Mammary epithelial cell (primary cell): ENCODE measurements at regions of chr17 and their contacts with region 1.

Region 1: GRCh38 chr17:61002316-61002736 is 324.7 kb downstream of the BCAS3 start:
- DNase-seq: peak; percentile 12
- H3K4me3 ChIP-seq: no peak overlapping the region
- H3K27ac ChIP-seq: no peak overlapping the region
- H3K4me1 ChIP-seq: no peaks in the 10 kb centered on the region
- H3K27me3 ChIP-seq: no peaks in the 10 kb centered on the region
- CTCF ChIP-seq: peak; percentile 32 to 52

Region 2: DNA sequence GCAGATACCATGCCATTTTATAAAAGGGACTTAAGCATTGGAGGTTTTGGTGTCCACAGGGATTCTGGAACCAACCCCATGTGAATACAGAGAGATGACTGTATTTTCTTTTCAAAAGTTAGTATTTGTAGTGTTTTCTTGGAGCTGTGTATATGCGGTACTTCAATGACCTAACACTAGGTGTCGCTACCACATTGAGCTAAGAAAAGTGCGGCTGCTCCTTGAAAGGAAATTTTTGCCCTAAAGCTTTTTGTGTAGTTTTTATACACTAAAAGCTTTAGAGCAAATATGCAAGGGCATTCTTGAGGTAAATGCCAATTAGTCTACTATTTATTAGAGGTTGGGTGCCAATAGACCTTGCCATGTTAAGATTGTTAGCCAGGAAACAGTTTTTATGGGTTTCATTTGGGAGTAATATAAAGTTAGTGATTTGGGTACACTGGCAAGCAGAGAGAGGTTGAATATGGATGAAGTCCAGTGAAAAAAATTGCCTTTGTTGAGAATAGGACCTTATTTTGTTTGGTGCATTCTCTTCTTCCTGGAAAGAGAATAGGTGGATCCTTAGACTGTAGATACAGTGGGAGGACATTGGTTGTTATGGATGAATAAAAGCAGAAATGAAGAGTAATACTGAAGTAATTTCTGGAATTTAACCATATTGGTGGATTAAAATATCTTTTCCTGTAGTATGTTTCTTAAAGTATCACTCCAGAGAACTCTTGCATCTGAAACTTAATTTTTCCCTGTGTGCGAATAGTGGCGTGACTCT is 281.4 kb before region 1 on chr17:
- CTCF ChIA-PET with region 1: no interaction called
- dilution Hi-C with region 1: no loop called
- in situ Hi-C with region 1: no loop called
- intact Hi-C with region 1: loop called (anchors 2 kb)
- DNase-seq: peak; percentile 35
- H3K4me3 ChIP-seq: no peak overlapping the region
- H3K27ac ChIP-seq: no peak overlapping the region
- H3K4me1 ChIP-seq: no peaks in the 10 kb centered on the region
- H3K27me3 ChIP-seq: no peaks in the 10 kb centered on the region
- CTCF ChIP-seq: peak; percentile 81 to 87

Region 3: GRCh38 chr17:61144741-61145564 is 142.6 kb after region 1 on chr17:
- CTCF ChIA-PET with region 1: no interaction called
- dilution Hi-C with region 1: no loop called
- in situ Hi-C with region 1: no loop called
- intact Hi-C with region 1: no loop called
- DNase-seq: no peak
- H3K4me3 ChIP-seq: no peak overlapping the region
- H3K27ac ChIP-seq: no peak overlapping the region
- H3K4me1 ChIP-seq: no peaks in the 10 kb centered on the region
- H3K27me3 ChIP-seq: no peaks in the 10 kb centered on the region
- CTCF ChIP-seq: no peak

Region 4: DNA sequence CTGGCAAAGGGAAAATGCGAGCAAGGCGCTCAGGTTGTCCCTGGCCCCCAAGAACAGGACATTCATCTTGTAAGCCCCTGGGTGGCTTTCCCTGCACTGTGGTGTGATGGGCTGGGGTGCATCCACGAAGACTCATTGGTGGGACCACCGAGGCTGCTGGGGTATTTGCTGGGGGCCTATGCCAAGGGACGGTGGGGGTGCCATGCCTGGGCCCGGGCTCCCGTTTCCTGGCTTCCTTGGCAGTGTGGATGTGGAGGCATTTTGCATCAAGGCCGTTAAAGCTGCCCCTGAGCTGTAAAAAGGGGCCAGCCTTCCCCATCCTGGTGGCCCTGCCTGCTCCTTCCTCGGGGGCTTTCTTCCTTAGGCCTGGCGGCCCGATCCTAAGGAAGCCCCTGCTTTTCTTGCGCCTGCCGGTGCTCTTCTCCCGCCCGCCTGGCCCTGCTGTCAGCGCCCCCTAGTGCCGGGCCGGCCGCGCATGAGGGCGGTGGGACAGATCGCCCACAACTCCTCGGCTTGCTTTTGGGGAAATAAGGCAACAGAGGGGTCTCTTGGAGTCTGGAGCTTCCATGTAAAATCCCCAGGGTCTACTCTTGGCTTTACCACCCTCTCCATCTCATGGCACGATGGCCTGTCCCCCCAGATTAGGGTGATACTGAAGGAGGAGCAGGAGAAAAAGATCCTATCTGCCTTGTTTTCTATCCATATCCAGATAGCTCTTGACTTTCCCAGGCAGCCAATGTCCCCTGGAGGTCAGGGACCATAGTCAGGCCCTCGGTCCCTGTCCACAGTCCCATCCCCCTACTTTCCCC is 387.5 kb after region 1 on chr17:
- CTCF ChIA-PET with region 1: no interaction called
- dilution Hi-C with region 1: no loop called
- in situ Hi-C with region 1: loop called (anchors 10 to 25 kb)
- intact Hi-C with region 1: loop called (anchors 1 kb)
- DNase-seq: no peak
- H3K4me3 ChIP-seq: no peak overlapping the region
- H3K27ac ChIP-seq: no peak overlapping the region
- H3K4me1 ChIP-seq: no peaks in the 10 kb centered on the region
- H3K27me3 ChIP-seq: no peaks in the 10 kb centered on the region
- CTCF ChIP-seq: peak; percentile 26 to 61

Region 5: DNA sequence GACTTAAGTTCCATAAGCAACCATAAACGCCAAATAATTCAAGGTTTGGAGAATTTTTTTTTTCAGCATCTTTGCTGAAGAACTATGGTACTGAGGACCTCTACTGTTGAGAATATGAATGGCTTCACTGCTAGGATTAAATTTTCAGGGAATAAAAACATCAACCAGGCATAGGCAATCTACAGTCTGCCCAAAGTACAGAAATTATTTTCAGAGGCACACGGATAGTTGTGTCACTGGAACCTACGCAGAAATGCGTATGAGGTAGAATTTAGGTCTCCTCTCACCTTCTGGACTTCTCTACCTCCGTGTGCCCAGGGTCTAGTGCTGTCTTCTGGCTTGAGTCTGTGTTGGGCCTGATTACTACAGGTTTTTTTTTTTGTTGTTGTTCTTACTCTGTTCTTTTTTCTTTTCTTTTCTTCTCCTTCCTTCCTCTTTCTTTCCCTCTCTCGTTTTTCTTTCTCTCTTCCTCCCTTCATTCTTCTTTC is 549.0 kb after region 1 on chr17:
- CTCF ChIA-PET with region 1: no interaction called
- dilution Hi-C with region 1: no loop called
- in situ Hi-C with region 1: no loop called
- intact Hi-C with region 1: loop called (anchors 1 kb)
- DNase-seq: no peak
- H3K4me3 ChIP-seq: no peak overlapping the region
- H3K27ac ChIP-seq: no peak overlapping the region
- H3K4me1 ChIP-seq: no peaks in the 10 kb centered on the region
- H3K27me3 ChIP-seq: peaks cover 8% of the 10 kb centered on the region
- CTCF ChIP-seq: peak; percentile 67 to 72